Astrocyte of the cerebellum (primary cell): ENCODE measurements at regions of chr2 and their contacts with region 1.

Region 1: GRCh38 chr2:55419679-55420438 is at the start of gene CCDC88A:
- DNase-seq: peak; percentile 93
- H3K4me3 ChIP-seq: peak within 1 kb of the TSS; percentile 84
- CTCF ChIP-seq: peak; percentile 34

Region 2: DNA sequence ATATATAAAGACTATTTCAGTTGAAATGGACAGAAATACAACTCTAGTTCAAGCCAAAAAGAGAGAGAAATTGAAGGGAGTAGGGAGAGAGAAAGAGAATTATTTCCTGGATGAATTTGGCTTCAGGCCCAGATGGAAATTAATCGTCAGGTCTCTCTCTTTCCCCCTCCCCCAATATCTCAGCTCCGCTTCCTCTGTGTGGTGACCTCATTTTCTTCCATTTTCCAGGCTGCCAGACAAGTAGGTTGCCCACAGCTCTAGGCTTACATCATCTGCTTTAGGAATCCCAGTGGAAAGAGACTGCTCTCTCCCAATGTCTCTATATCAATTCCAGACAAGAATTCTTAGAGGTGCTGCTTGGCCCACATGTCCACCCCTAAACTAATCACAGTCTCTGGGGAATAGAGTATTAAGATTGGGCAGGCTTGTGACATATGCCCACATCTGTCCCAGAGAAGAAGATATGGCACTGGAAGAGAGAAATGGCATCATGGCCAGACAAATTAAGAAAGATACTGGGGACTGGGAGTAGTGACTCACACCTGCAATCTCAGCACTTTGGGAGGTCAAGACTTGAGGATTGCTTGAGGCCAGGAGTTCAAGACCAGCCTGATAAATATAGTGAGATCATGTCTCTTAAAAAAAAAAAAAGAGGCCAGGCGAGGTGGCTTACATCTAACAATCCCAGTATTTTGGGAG is 62.5 kb after region 1 on chr2:
- in situ Hi-C with region 1: no loop called
- DNase-seq: peak; percentile 13
- H3K4me3 ChIP-seq: no peak overlapping the region
- CTCF ChIP-seq: no peak

Region 3: DNA sequence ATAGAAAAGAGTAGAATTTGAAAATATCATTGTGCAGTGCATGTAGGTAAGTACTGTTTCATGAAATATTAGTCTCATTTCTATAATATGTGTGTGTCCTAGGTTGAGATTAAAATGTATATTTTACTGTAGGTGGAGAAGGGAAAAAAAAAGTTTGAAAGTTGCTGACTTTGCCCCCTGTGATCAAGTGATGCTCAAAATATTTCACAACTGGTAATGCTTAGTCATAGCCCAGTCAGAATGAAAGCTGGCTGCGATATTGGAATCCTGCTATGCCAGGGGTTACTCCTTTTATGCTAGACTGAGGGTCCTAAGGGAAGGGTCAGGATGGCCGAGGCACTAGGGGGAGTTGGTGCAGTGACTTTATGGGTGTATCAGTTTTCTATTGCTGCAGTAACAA is 80.2 kb after region 1 on chr2:
- in situ Hi-C with region 1: loop called (anchors 5 kb)
- DNase-seq: peak; percentile 16
- H3K4me3 ChIP-seq: no peak overlapping the region
- CTCF ChIP-seq: no peak